Posterior cingulate gyrus (tissue), 11 donors: ENCODE measurements at regions of chr3 and their contacts with region 1.

Region 1: GRCh38 chr3:126878664-126879063 is 104.3 kb upstream of the PLXNA1 start:
- DNase-seq: no peak

Region 2: DNA sequence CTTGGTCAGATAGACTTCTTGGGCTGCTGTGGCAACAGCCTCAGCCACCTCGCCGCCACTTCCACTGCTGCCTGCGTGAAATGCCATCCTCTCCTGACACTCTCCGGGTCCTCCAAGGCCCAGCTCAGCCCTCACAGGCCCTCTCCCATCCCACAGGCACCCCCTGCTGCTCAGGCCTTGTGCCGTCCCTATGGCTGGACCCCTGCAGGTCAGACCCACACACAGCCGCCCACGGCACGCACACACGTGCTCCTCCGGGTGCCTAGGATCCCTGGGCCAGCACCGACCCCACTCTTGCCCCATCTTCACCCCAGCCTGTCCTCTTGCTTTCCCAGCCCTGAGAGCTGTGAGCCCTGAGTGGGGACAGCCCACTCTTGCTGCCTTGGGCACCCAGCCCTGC is 464.3 kb before region 1 on chr3:
- intact Hi-C with region 1: no loop called
- DNase-seq: peak in 2 of 10 donors; percentile 62 to 66

Region 3: GRCh38 chr3:126731044-126731443 is 147.6 kb before region 1 on chr3:
- intact Hi-C with region 1: no loop called
- DNase-seq: no peak

Region 4: GRCh38 chr3:126897943-126898342 is 19.3 kb after region 1 on chr3:
- intact Hi-C with region 1: loop called (anchors 1 kb)
- DNase-seq: no peak